GM12878 (cell line): ENCODE measurements at regions of chr1 and their contacts with region 1.

Region 1: GRCh38 chr1:56533621-56534020 is 45.7 kb downstream of the PLPP3 start:
- DNase-seq: no peak
- ATAC-seq: peak; percentile 82
- H3K4me3 ChIP-seq: no peak overlapping the region
- H3K27ac ChIP-seq: no peak overlapping the region
- H3K4me1 ChIP-seq: peaks cover 2% of the 10 kb centered on the region; the same call in 1 of the 2 replicates
- H3K27me3 ChIP-seq: no peaks in the 10 kb centered on the region
- CTCF ChIP-seq: no peak
- EP300 ChIP-seq: no peak
- POLR2A ChIP-seq: no peak
- RAD21 ChIP-seq: no peak

Region 2: DNA sequence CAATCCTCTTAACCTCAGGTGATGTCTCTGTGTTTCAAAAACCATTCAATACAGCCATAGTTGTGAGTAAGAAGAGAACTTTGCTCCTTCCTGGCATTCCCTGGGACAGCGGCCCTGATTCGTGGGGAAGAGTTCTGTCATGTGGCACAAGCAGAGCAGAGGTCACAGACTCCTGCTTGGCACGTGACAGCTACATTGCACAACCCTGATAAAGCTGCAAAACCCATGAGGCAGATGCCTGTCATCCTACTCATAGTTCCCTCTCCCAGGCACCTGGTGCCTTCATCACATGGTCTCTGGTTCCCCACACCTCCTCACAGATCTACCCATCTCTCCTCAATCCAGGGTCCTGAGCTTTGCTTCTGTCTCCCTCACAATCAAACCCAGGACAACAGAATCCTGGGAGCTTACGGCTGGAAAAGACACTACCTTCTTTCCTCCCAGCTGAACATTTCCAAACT is 25.1 kb before region 1 on chr1:
- CTCF ChIA-PET with region 1: no interaction called
- POLR2A ChIA-PET with region 1: no interaction called
- RAD21 ChIA-PET with region 1: no interaction called
- SMC1A ChIA-PET with region 1: no interaction called
- in situ Hi-C with region 1: no loop called
- intact Hi-C with region 1: no loop called
- DNase-seq: no peak
- ATAC-seq: no peak
- H3K4me3 ChIP-seq: no peak overlapping the region
- H3K27ac ChIP-seq: no peak overlapping the region
- H3K4me1 ChIP-seq: no peaks in the 10 kb centered on the region
- H3K27me3 ChIP-seq: no peaks in the 10 kb centered on the region
- CTCF ChIP-seq: no peak
- EP300 ChIP-seq: no peak
- POLR2A ChIP-seq: no peak
- RAD21 ChIP-seq: no peak

Region 3: GRCh38 chr1:56547953-56548352 is 14.3 kb after region 1 on chr1:
- CTCF ChIA-PET with region 1: interaction called, 6 read pairs
- POLR2A ChIA-PET with region 1: interaction called, 8 read pairs
- RAD21 ChIA-PET with region 1: interaction called, 7 read pairs
- SMC1A ChIA-PET with region 1: interaction called, 136 read pairs
- in situ Hi-C with region 1: no loop called
- intact Hi-C with region 1: no loop called
- DNase-seq: no peak
- ATAC-seq: no peak
- H3K4me3 ChIP-seq: no peak overlapping the region
- H3K27ac ChIP-seq: no peak overlapping the region
- H3K4me1 ChIP-seq: 0 out of 2 replicates have a peak, but pooled peaks cover 4% of the 10 kb centered on the region
- H3K27me3 ChIP-seq: no peaks in the 10 kb centered on the region; a peak in 1 of 4 replicates
- CTCF ChIP-seq: no peak
- EP300 ChIP-seq: no peak
- POLR2A ChIP-seq: no peak
- RAD21 ChIP-seq: no peak

Region 4: DNA sequence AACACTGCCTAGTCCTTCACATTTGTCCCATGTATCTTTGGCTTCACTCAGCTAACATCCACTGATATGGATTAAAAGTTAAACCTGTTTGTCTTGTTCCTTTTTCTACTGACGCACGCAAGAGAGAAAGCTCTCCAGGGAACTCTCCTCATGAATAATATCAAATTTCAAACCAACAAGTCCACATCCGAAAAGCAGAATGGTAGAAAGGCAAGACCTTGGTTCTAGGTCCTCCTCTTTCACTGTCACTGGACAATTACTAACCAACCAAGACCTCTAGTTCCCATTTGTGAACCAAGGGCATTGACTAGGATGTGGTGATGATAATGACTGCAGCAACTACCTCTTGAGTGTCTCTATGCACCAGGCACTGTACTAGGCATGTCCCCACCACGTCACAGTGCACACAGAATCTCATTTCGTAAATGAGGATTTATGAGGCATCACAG is 37.3 kb after region 1 on chr1:
- CTCF ChIA-PET with region 1: interaction called, 116 read pairs
- POLR2A ChIA-PET with region 1: interaction called, 4 read pairs
- RAD21 ChIA-PET with region 1: interaction called, 174 read pairs
- SMC1A ChIA-PET with region 1: interaction called, 342 read pairs
- in situ Hi-C with region 1: no loop called
- intact Hi-C with region 1: no loop called
- DNase-seq: no peak
- ATAC-seq: peak; percentile 33
- H3K4me3 ChIP-seq: no peak overlapping the region
- H3K27ac ChIP-seq: no peak overlapping the region
- H3K4me1 ChIP-seq: no peaks in the 10 kb centered on the region
- H3K27me3 ChIP-seq: peaks cover 0 to 3% of the 10 kb centered on the region in 2 experiments; a peak in 1 of 4 replicates
- CTCF ChIP-seq: no peak
- EP300 ChIP-seq: no peak
- POLR2A ChIP-seq: no peak
- RAD21 ChIP-seq: no peak